Endothelial cell of umbilical vein (primary cell): ENCODE measurements at regions of chr9 and their contacts with region 1.

Region 1: GRCh38 chr9:132169672-132170392 is 8.0 kb downstream of the NTNG2 start:
- DNase-seq: peak; percentile 30
- H3K4me3 ChIP-seq: no peak overlapping the region
- H3K27ac ChIP-seq: no peak overlapping the region
- H3K4me1 ChIP-seq: no peaks in the 10 kb centered on the region
- H3K27me3 ChIP-seq: peaks cover 21 to 24% of the 10 kb centered on the region in 2 experiments
- CTCF ChIP-seq: peak; percentile 76 to 95
- POLR2A ChIP-seq: no peak

Region 2: DNA sequence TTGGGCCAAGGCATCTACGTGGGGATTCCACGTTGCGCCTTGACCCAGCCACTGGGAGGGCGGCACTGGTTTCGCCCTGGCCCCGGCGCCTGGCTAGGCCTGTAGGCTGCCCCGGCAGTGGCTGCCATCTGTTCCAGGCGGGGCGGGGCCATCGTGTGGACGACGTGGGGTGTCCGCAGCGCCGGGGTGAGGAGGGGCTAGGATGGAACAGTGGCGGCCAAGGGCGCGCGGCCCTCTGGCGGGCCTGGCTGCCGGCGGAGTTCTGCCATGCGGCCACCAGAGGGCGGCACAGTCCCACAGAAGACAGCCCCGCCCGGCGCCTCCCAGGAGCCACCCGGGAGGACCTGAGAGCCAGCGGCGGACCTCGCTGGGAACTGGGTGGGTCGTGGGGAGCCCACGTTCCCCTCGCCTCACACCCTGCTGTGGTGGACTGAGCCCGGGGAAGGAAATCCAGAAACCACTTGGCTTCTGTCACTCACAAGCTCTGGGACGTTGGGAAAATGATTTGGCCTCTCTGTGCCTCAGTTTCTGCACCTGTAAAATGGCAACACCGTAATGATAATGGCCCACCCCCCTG is 407.4 kb before region 1 on chr9:
- CTCF ChIA-PET with region 1: interaction called, 18 read pairs
- POLR2A ChIA-PET with region 1: no interaction called
- dilution Hi-C with region 1: no loop called
- intact Hi-C with region 1: loop called (anchors 2 kb)
- DNase-seq: peak; percentile 47
- H3K4me3 ChIP-seq: no peak overlapping the region
- H3K27ac ChIP-seq: no peak overlapping the region
- H3K4me1 ChIP-seq: no peaks in the 10 kb centered on the region
- H3K27me3 ChIP-seq: peaks cover 13 to 17% of the 10 kb centered on the region in 2 experiments
- CTCF ChIP-seq: peak; percentile 77 to 91
- POLR2A ChIP-seq: no peak

Region 3: GRCh38 chr9:132150256-132150655 is 19.6 kb before region 1 on chr9:
- CTCF ChIA-PET with region 1: interaction called, 14 read pairs
- POLR2A ChIA-PET with region 1: no interaction called
- dilution Hi-C with region 1: no loop called
- intact Hi-C with region 1: no loop called
- DNase-seq: no peak
- H3K4me3 ChIP-seq: no peak overlapping the region
- H3K27ac ChIP-seq: no peak overlapping the region
- H3K4me1 ChIP-seq: no peaks in the 10 kb centered on the region
- H3K27me3 ChIP-seq: peaks cover 4 to 6% of the 10 kb centered on the region in 2 experiments
- CTCF ChIP-seq: no peak
- POLR2A ChIP-seq: no peak

Region 4: GRCh38 chr9:132192728-132193127 is 22.9 kb after region 1 on chr9:
- CTCF ChIA-PET with region 1: interaction called, 54 read pairs
- POLR2A ChIA-PET with region 1: no interaction called
- dilution Hi-C with region 1: no loop called
- intact Hi-C with region 1: no loop called
- DNase-seq: peak; percentile 47
- H3K4me3 ChIP-seq: no peak overlapping the region
- H3K27ac ChIP-seq: no peak overlapping the region
- H3K4me1 ChIP-seq: peaks cover 6% of the 10 kb centered on the region
- H3K27me3 ChIP-seq: peaks cover 14% of the 10 kb centered on the region in 2 experiments
- CTCF ChIP-seq: no peak
- POLR2A ChIP-seq: no peak

Region 5: DNA sequence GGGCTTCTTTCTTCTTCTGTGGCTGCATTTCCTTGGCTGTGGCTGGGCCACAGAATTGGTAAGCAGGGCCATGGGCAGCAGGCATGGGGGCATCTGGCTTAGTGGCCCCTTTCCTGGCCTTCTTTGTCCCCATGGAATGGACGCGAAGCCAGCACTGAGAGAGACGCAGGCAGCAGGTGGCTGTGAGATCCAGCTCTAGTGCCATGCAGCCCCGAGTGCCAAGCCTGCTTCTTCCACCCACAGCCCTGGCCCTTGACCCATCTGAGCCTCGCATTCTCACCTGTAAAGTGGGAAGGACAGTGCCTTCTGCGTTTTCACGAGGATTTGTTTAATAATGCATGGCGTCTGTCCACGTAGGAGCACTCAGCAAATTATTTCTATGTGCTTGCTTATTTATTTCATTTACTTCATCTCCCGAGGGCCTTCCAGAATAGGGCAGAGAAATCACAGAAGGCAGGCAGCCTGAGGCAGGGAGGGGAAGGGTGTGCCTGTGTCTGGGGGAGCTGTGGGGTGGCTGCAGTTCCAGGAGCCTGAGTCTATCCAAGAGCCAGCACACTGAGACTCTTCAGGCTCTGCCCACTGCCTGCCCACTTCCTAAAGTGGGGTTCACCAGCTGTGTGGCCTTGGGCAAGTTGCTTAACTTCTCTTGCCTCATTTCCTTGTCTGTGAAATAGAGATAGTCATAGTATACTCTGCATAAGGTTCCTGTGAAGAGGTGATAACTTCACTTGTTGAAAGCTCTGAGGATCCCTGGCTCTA is 47.2 kb after region 1 on chr9:
- CTCF ChIA-PET with region 1: interaction called, 13 read pairs
- POLR2A ChIA-PET with region 1: no interaction called
- dilution Hi-C with region 1: no loop called
- intact Hi-C with region 1: no loop called
- DNase-seq: no peak
- H3K4me3 ChIP-seq: no peak overlapping the region
- H3K27ac ChIP-seq: no peak overlapping the region
- H3K4me1 ChIP-seq: peaks cover 9% of the 10 kb centered on the region
- H3K27me3 ChIP-seq: peaks cover 5 to 8% of the 10 kb centered on the region in 2 experiments
- CTCF ChIP-seq: no peak
- POLR2A ChIP-seq: no peak

Region 6: GRCh38 chr9:132249123-132249522 is 79.3 kb after region 1 on chr9:
- CTCF ChIA-PET with region 1: interaction called, 40 read pairs
- POLR2A ChIA-PET with region 1: no interaction called
- dilution Hi-C with region 1: no loop called
- intact Hi-C with region 1: no loop called
- DNase-seq: no peak
- H3K4me3 ChIP-seq: no peak overlapping the region
- H3K27ac ChIP-seq: no peak overlapping the region
- H3K4me1 ChIP-seq: no peaks in the 10 kb centered on the region
- H3K27me3 ChIP-seq: peaks cover 2 to 5% of the 10 kb centered on the region in 2 experiments
- CTCF ChIP-seq: no peak
- POLR2A ChIP-seq: no peak

Region 7: GRCh38 chr9:132268725-132269352 is 99.0 kb after region 1 on chr9:
- CTCF ChIA-PET with region 1: interaction called, 11 read pairs
- POLR2A ChIA-PET with region 1: no interaction called
- dilution Hi-C with region 1: no loop called
- intact Hi-C with region 1: no loop called
- DNase-seq: peak; percentile 74
- H3K4me3 ChIP-seq: no peak overlapping the region
- H3K27ac ChIP-seq: no peak overlapping the region
- H3K4me1 ChIP-seq: peaks cover 7% of the 10 kb centered on the region
- H3K27me3 ChIP-seq: no peaks in the 10 kb centered on the region
- CTCF ChIP-seq: peak; percentile 85 to 93
- POLR2A ChIP-seq: no peak

Region 8: DNA sequence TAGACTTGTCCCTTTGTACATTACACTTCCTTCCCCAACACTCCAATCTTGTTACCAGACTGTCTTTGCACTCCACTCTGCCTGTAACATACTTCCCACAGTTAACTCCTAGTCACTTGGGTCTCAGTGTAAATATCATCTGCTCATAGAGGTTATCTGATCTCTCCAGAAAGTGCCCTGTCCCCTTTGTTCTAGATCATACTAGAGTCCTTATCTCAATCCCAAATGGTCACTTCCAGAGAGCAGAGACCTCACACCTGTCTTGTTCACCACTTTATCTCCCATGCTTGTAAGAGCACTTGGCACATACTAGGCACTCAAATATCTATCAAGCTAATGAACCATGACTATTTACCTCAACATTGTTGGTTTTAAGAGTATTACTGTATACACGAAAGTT is 154.6 kb after region 1 on chr9:
- CTCF ChIA-PET with region 1: no interaction called
- POLR2A ChIA-PET with region 1: no interaction called
- dilution Hi-C with region 1: no loop called
- intact Hi-C with region 1: no loop called
- DNase-seq: peak; percentile 7
- H3K4me3 ChIP-seq: no peak overlapping the region
- H3K27ac ChIP-seq: no peak overlapping the region
- H3K4me1 ChIP-seq: peaks cover 18% of the 10 kb centered on the region
- H3K27me3 ChIP-seq: no peaks in the 10 kb centered on the region
- CTCF ChIP-seq: no peak
- POLR2A ChIP-seq: no peak